ENCODE measurements at regions of chr15 and their contacts with region 1.

Region 1: DNA sequence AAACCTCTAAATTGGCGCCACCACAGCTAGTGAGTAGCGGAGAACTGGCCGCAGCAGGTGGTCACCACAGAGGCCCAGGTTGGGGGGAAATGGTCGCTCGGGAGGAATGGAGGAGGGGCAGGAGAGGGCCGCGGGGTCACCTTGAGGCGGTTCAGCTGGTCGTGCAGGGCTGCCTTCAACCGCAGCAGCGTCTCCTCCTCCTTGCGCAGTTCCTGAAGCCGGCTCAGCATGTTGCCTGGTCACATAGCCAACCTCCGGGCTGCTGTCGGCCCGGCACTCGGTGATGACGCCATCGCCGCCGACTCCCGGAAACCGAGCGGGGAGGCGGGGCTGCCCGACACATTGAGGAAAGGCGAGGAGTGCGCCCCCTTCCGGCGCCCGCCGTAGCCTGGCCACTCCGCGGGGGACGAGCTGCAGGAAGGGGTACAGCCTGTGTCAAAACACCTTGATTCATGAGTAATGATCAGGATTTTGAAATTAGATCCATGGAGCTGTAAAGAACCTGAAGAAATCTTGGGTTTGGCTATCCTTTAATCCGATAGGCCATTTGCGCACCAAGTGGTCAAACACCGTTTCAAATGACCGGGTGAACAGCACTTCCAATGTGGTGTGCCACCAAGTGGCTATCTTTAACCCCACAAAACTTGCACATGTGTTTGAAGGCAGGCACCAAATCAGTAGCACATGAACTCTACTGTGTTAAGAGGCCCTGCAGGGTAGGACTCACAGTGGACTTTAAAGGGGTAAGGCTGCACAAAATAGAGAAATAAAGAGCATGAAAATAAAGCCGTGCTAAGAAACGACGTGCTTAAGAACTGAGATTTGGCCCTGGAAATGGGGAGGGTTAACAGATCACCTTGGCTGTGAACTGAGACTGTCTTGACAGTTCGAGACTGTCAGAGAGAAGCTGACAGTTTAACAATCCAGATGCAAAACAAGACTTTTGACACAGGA is at the start of gene SNAPC5:
- DNase-seq: peak; percentile 98
- H3K4me3 Mint-ChIP-seq: peak within 1 kb of the TSS; percentile 89
- H3K27ac Mint-ChIP-seq: peak within 1 kb of the TSS; percentile 95
- H3K4me1 Mint-ChIP-seq: peaks cover 60% of the 10 kb centered on the region
- H3K27me3 Mint-ChIP-seq: no peaks in the 10 kb centered on the region
- total RNA-seq, gene SNAPC5: 23.7 to 23.9 TPM

Region 2: DNA sequence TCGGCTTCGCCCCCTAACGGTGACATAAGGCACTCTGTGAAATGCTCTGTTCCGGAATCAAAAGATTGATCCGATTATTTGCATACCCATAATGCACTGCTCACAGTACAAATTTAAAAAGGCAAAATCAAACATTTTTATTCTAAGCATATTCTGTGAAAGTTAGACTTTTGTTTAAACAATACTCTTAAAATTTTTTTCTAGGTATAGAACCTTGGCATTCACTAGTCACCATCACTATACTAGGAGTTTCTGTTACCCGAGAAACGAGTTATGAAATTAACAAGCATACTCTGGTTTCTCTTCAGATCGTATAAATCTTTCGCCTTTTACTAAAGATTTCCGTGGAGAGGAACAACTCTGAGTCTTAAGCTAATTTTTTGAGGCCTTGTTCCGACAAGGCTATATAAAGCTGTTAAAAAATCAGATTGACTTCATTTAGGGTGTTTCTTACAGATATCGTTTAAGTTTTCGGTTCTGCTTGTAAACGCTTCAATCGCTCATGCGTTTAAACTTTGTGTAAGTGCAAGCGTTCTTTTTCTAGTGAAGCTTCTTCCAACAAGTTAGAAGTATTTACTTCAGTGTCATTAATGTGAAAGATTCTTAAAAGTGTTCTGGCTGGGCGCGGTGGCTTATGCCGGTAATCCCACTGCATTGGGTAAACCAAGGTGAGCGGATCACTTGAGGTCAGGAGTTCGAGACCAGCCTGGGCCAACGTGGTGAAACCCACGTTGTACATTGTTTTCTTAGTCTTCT is 1193.2 kb before region 1 on chr15 and contains the start of gene RNU5B-1:
- CTCF ChIA-PET with region 1: no interaction called
- intact Hi-C with region 1: loop called (anchors 10 kb)
- DNase-seq: peak; percentile 86
- H3K4me3 Mint-ChIP-seq: peak within 1 kb of the TSS; percentile 89
- H3K27ac Mint-ChIP-seq: peak within 1 kb of the TSS; percentile 97
- H3K4me1 Mint-ChIP-seq: peaks cover 24% of the 10 kb centered on the region
- H3K27me3 Mint-ChIP-seq: peaks cover 4% of the 10 kb centered on the region
- total RNA-seq, gene RNU5B-1: not detected

Region 3: GRCh38 chr15:66251790-66252684 is 245.7 kb before region 1 on chr15:
- CTCF ChIA-PET with region 1: interaction called, 6 read pairs
- intact Hi-C with region 1: loop called (anchors 2 kb)
- DNase-seq: peak; percentile 64
- H3K4me3 Mint-ChIP-seq: peak overlapping the region; percentile 65
- H3K27ac Mint-ChIP-seq: no peak overlapping the region
- H3K4me1 Mint-ChIP-seq: peaks cover 10% of the 10 kb centered on the region
- H3K27me3 Mint-ChIP-seq: peaks cover 56% of the 10 kb centered on the region

Region 4: GRCh38 chr15:66293419-66294156 is 204.2 kb before region 1 on chr15 and contains the start of gene DIS3L:
- CTCF ChIA-PET with region 1: interaction called, 10 read pairs
- intact Hi-C with region 1: loop called (anchors 1 kb)
- DNase-seq: peak; percentile 66
- H3K4me3 Mint-ChIP-seq: peak within 1 kb of the TSS; percentile 84
- H3K27ac Mint-ChIP-seq: peak within 1 kb of the TSS; percentile 92
- H3K4me1 Mint-ChIP-seq: peaks cover 38% of the 10 kb centered on the region
- H3K27me3 Mint-ChIP-seq: no peaks in the 10 kb centered on the region
- total RNA-seq, gene DIS3L: 24.0 to 24.6 TPM

Region 5: GRCh38 chr15:66401130-66402021 is 96.4 kb before region 1 on chr15:
- CTCF ChIA-PET with region 1: interaction called, 3 read pairs
- intact Hi-C with region 1: loop called (anchors 5 kb)
- DNase-seq: peak; percentile 51
- H3K4me3 Mint-ChIP-seq: peak overlapping the region; percentile 59
- H3K27ac Mint-ChIP-seq: peak overlapping the region; percentile 81
- H3K4me1 Mint-ChIP-seq: peaks cover 77% of the 10 kb centered on the region
- H3K27me3 Mint-ChIP-seq: no peaks in the 10 kb centered on the region

Region 6: DNA sequence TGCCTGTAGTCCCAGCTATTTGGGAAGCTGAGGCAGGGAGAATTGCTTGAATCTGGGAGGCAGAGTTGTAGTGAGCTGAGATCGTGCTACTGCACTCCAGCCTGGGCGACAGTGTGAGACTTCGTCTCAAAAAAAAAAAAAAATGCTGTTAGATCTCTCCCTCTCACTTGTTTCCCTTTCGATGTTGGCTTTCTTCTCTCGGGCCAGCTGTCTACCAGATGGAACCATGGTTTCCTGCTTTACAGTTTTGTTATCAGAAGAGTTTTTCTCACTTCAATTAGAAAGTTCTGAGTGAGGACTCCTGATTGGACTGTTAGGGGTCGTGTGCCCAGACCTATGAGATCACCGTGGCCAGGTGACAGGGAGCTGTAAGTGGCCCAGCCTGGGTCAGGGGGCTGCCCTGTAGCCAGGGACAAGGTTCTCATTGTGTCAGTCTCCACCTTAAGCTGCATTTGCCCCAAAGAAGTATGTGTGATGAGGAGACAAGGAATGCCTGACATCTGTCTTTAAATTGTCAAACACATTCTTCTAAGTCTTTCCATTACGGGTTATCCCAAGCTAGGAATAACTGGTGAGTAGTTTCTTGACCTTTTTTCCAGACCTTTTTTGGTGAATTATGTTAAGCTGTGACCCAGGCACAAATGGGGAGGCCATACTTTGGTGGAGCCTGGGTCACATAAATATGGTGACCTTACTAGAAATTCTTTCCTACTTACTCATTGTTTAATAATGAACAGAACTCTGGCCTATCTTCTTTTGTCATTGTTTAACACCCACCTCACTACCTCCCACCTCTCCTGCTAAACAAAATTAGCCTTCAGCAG is 25.4 kb before region 1 on chr15:
- CTCF ChIA-PET with region 1: interaction called, 12 read pairs
- intact Hi-C with region 1: loop called (anchors 1 kb)
- DNase-seq: peak; percentile 82
- H3K4me3 Mint-ChIP-seq: peak overlapping the region; percentile 66
- H3K27ac Mint-ChIP-seq: peak overlapping the region; percentile 80
- H3K4me1 Mint-ChIP-seq: peaks cover 62% of the 10 kb centered on the region
- H3K27me3 Mint-ChIP-seq: no peaks in the 10 kb centered on the region

Measured in activated naive CD4-positive, alpha-beta T cell treated with anti-CD3 and anti-CD28 coated beads for 36 hours (primary cell).